Activated B cell treated with CpG ODN at 0.5 μM for 24 hours (primary cell): ENCODE measurements at regions of chr3 and their contacts with region 1.

Region 1: GRCh38 chr3:22729985-22730384 is 473.1 kb upstream of the UBE2E2 start:
- DNase-seq: no peak
- ATAC-seq: no peak
- H3K4me3 Mint-ChIP-seq: no peak overlapping the region
- H3K27ac Mint-ChIP-seq: no peak overlapping the region
- H3K4me1 Mint-ChIP-seq: no peaks in the 10 kb centered on the region
- H3K27me3 Mint-ChIP-seq: peaks cover 2% of the 10 kb centered on the region
- CTCF ChIP-seq: no peak

Region 2: GRCh38 chr3:22862111-22862510 is 132.1 kb after region 1 on chr3:
- CTCF ChIA-PET with region 1: no interaction called
- POLR2A ChIA-PET with region 1: no interaction called
- intact Hi-C with region 1: no loop called
- DNase-seq: no peak
- ATAC-seq: no peak
- H3K4me3 Mint-ChIP-seq: no peak overlapping the region
- H3K27ac Mint-ChIP-seq: no peak overlapping the region
- H3K4me1 Mint-ChIP-seq: no peaks in the 10 kb centered on the region
- H3K27me3 Mint-ChIP-seq: no peaks in the 10 kb centered on the region
- CTCF ChIP-seq: no peak

Region 3: DNA sequence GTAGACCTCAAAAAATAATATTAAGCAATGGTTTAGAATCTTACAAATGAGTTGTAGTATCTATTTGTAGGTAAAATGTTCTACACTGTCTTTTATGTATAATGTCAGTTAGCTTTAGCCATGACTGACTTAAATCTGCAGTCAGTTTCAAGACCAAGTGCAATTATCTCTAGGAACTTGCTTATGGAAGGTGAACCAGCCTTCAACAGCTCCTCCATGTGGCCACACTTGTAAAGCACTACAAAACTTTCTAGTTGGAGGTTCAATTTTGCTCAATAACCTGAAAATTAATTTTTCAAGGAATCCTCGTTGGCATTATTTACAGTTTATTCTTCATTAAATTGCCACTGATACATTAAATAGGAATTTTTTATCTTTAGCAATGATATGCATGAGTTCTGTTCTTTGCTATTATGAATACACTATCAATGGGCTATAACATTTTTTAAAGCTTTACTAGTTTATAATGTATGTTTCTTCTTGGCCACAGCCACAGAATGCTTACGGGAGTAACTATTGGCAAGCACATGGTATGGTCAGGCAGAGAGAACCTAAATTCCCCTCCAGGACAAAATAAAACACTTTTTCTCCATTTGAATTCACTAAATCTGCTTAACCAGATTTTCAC is 157.8 kb after region 1 on chr3:
- CTCF ChIA-PET with region 1: no interaction called
- POLR2A ChIA-PET with region 1: no interaction called
- intact Hi-C with region 1: loop called (anchors 1 kb)
- DNase-seq: no peak
- ATAC-seq: no peak
- H3K4me3 Mint-ChIP-seq: no peak overlapping the region
- H3K27ac Mint-ChIP-seq: no peak overlapping the region
- H3K4me1 Mint-ChIP-seq: no peaks in the 10 kb centered on the region
- H3K27me3 Mint-ChIP-seq: peaks cover 19% of the 10 kb centered on the region
- CTCF ChIP-seq: no peak

Region 4: GRCh38 chr3:23152989-23153388 is 423.0 kb after region 1 on chr3:
- CTCF ChIA-PET with region 1: no interaction called
- POLR2A ChIA-PET with region 1: no interaction called
- intact Hi-C with region 1: no loop called
- DNase-seq: no peak
- ATAC-seq: no peak
- H3K4me3 Mint-ChIP-seq: no peak overlapping the region
- H3K27ac Mint-ChIP-seq: no peak overlapping the region
- H3K4me1 Mint-ChIP-seq: no peaks in the 10 kb centered on the region
- H3K27me3 Mint-ChIP-seq: no peaks in the 10 kb centered on the region
- CTCF ChIP-seq: no peak

Region 5: DNA sequence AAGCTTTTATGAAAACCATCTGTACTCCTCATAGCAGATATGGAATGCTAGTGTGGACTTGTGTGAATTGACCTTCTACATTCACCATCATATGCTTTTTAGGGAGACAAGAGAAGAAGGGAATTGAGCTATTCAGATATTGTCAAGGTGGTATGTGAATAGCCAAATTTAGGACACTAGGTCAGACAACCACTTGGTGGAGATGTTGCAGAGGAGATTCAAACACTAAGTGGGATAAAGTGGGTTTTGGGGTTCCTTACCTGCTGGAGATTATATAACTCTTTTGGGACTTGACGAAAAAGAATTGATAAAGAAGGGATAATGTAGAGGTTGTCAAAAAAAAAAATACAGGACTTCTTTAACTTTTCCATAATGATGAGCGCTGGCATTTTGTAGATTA is 1996.4 kb after region 1 on chr3:
- CTCF ChIA-PET with region 1: no interaction called
- POLR2A ChIA-PET with region 1: no interaction called
- intact Hi-C with region 1: no loop called
- DNase-seq: no peak
- ATAC-seq: no peak
- H3K4me3 Mint-ChIP-seq: no peak overlapping the region
- H3K27ac Mint-ChIP-seq: no peak overlapping the region
- H3K4me1 Mint-ChIP-seq: no peaks in the 10 kb centered on the region
- H3K27me3 Mint-ChIP-seq: peaks cover 2% of the 10 kb centered on the region
- CTCF ChIP-seq: no peak